AG04449 (cell line): ENCODE measurements at regions of chr10 and their contacts with region 1.

Region 1: GRCh38 chr10:49552249-49552672 is 13.3 kb upstream of the ERCC6 start:
- DNase-seq: peak; percentile 80
- H3K4me3 ChIP-seq: peak overlapping the region; percentile 1; the same call in 1 of the 2 replicates
- CTCF ChIP-seq: no peak

Region 2: GRCh38 chr10:49568235-49568634 is 16.0 kb after region 1 on chr10:
- CTCF ChIA-PET with region 1: interaction called, 3 read pairs
- POLR2A ChIA-PET with region 1: interaction called, 12 read pairs
- DNase-seq: no peak
- H3K4me3 ChIP-seq: no peak overlapping the region
- CTCF ChIP-seq: no peak